CD4-positive, alpha-beta T cell (primary cell): ENCODE measurements at regions of chr3 and their contacts with region 1.

Region 1: DNA sequence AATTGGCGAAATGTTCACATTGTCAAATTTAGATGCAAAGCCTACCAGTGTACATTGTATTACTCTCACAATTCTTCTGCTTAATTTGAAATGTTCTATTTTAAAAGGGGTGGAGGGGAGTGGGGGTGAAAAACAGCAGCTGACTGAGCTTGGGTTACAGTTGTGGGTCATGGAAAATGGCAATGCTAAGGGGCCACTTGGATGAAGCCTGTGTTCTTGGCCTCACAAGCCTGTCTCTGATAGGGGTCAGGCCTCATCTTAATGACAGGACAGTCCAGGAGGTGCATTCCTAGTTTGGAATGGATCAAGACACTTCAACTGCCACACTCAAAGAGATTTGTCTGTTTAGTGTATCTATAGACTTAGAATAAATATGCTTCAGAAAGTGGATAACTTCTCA is 158.2 kb downstream of the TNIK start:
- DNase-seq: no peak
- ATAC-seq: no peak
- H3K4me3 ChIP-seq: no peak overlapping the region
- H3K4me3 Mint-ChIP-seq: no peak overlapping the region
- H3K27ac ChIP-seq: no peak overlapping the region
- H3K27ac Mint-ChIP-seq: no peak overlapping the region
- H3K4me1 ChIP-seq: peaks cover 6% of the 10 kb centered on the region
- H3K4me1 Mint-ChIP-seq: peaks cover 84% of the 10 kb centered on the region
- H3K27me3 ChIP-seq: no peaks in the 10 kb centered on the region
- H3K27me3 Mint-ChIP-seq: no peaks in the 10 kb centered on the region
- CTCF ChIP-seq: no peak

Region 2: DNA sequence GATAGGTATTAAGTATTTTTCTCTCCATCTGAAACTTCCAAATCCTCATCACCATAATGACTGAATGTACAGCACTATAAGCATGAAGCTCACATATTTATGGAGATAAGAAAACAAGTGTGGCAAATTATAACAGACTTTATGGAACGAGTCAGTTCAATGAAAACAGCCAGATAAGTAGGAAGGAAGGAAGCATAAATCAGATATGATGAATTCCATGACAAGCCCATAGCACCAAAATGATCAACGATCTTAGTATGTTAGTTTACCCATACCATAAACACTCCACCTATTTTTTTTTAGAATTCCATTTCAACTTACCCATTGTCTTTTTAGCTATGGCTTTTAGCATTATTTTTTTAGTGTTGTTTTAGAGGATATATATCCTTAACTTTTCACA is 11.3 kb before region 1 on chr3:
- CTCF ChIA-PET with region 1: no interaction called
- POLR2A ChIA-PET with region 1: no interaction called
- intact Hi-C with region 1: loop called in 1 of 2 experiments (anchors 1 kb)
- DNase-seq: no peak
- ATAC-seq: no peak
- H3K4me3 ChIP-seq: no peak overlapping the region
- H3K4me3 Mint-ChIP-seq: peak overlapping the region; percentile 12
- H3K27ac ChIP-seq: no peak overlapping the region
- H3K27ac Mint-ChIP-seq: no peak overlapping the region
- H3K4me1 ChIP-seq: peaks cover 27% of the 10 kb centered on the region
- H3K4me1 Mint-ChIP-seq: peaks cover 68% of the 10 kb centered on the region
- H3K27me3 ChIP-seq: no peaks in the 10 kb centered on the region
- H3K27me3 Mint-ChIP-seq: no peaks in the 10 kb centered on the region
- CTCF ChIP-seq: no peak